Caco-2 (cell line): ENCODE measurements at regions of chr16 and their contacts with region 1.

Region 1: DNA sequence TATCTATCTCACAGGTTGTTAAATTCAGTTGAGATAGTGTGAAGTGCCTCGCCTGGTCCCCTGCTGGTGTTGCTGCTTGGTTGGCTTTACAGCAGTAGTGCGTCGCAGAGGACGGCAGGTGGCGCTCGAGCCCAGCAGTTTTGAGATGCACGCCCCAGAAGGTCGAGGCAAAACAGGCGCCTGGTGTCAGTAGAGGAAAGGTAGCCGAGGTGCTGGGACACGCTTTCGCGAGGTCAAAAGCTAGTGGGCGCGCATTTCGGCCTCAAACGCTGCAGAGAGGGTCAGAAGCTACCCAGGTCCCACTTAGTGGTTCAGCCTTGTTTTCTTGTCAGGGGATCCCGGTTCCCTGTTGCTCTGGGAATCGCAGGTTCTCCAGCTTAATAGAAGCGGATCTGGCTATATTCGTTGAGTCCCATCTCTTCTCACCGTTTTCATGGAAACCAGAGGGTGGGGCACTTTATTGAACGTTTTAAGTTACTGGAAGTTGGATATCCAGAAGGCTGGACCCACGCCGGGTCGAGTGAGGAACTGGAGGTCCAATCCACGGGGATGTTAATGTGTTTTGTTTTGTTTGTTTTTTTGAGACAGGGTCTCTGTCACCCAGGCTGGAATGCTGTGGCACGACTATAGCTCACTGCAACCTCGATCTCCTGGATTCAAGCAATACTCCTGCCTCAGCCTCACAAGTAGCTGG is 10.3 kb upstream of the ZFP90 start:
- DNase-seq: peak; percentile 88 to 94
- H3K4me3 ChIP-seq: peak overlapping the region; percentile 95
- H3K4me3 Mint-ChIP-seq: peak overlapping the region; percentile 83
- H3K27ac Mint-ChIP-seq: peak overlapping the region; percentile 86
- H3K4me1 ChIP-seq: no peaks in the 10 kb centered on the region
- H3K4me1 Mint-ChIP-seq: peaks cover 9% of the 10 kb centered on the region
- H3K27me3 ChIP-seq: no peaks in the 10 kb centered on the region
- H3K27me3 Mint-ChIP-seq: no peaks in the 10 kb centered on the region
- CTCF ChIP-seq: peak; percentile 98

Region 2: DNA sequence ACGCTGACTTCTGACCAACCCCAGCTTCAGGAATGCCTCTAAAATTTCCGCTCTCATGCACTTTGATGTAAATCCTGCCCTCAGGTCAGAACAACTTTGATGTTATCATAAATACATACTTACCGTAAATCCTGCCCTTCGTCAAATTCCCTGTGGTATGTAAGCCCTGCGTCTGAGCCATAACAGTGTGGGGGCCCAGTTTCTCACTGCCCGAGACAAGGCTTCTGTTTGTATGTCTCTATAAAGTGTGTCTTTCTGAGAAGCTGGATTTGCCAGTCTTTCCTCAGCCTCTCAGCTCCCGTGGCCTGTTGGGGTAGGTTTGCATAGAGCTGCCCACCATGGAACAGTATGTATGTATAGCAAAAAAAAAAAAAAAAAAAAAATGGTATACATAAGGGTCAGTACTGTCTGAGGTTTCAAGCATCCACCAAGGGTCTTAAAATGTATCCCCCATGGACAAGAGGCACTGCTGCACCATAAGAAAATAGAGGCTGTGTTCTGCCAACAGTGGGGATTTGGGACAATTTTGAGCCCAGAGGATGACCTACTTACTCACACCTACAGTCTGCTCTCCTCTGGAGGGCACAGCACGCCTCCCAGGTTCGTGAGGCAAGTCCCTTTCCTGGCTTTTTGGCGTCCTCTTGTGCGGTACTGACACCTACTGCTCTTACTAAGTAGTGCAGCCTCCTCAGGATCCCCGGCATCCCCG is 200.5 kb before region 1 on chr16:
- CTCF ChIA-PET with region 1: no interaction called
- POLR2A ChIA-PET with region 1: no interaction called
- intact Hi-C with region 1: no loop called
- DNase-seq: peak; percentile 96
- H3K4me3 ChIP-seq: no peak overlapping the region
- H3K4me3 Mint-ChIP-seq: peak overlapping the region; percentile 65
- H3K27ac Mint-ChIP-seq: peak overlapping the region; percentile 96
- H3K4me1 ChIP-seq: peaks cover 78% of the 10 kb centered on the region
- H3K4me1 Mint-ChIP-seq: peaks cover 49% of the 10 kb centered on the region
- H3K27me3 ChIP-seq: no peaks in the 10 kb centered on the region
- H3K27me3 Mint-ChIP-seq: no peaks in the 10 kb centered on the region
- CTCF ChIP-seq: peak; percentile 96 to 98

Region 3: GRCh38 chr16:68396481-68396880 is 132.4 kb before region 1 on chr16:
- CTCF ChIA-PET with region 1: no interaction called
- POLR2A ChIA-PET with region 1: no interaction called
- intact Hi-C with region 1: no loop called
- DNase-seq: peak in 1 of 2 experiments; percentile 50
- H3K4me3 ChIP-seq: no peak overlapping the region
- H3K4me3 Mint-ChIP-seq: no peak overlapping the region
- H3K27ac Mint-ChIP-seq: no peak overlapping the region
- H3K4me1 ChIP-seq: no peaks in the 10 kb centered on the region
- H3K4me1 Mint-ChIP-seq: no peaks in the 10 kb centered on the region
- H3K27me3 ChIP-seq: no peaks in the 10 kb centered on the region
- H3K27me3 Mint-ChIP-seq: no peaks in the 10 kb centered on the region
- CTCF ChIP-seq: peak; percentile 65 to 69

Region 4: GRCh38 chr16:68590201-68590994 is 61.6 kb after region 1 on chr16:
- CTCF ChIA-PET with region 1: interaction called, 20 read pairs
- POLR2A ChIA-PET with region 1: no interaction called
- intact Hi-C with region 1: loop called (anchors 2 kb)
- DNase-seq: peak; percentile 62 to 74
- H3K4me3 ChIP-seq: no peak overlapping the region
- H3K4me3 Mint-ChIP-seq: peak overlapping the region; percentile 55
- H3K27ac Mint-ChIP-seq: no peak overlapping the region
- H3K4me1 ChIP-seq: no peaks in the 10 kb centered on the region
- H3K4me1 Mint-ChIP-seq: no peaks in the 10 kb centered on the region
- H3K27me3 ChIP-seq: no peaks in the 10 kb centered on the region
- H3K27me3 Mint-ChIP-seq: no peaks in the 10 kb centered on the region
- CTCF ChIP-seq: peak; percentile 44 to 57

Region 5: GRCh38 chr16:68696514-68696913 is 167.7 kb after region 1 on chr16:
- CTCF ChIA-PET with region 1: interaction called, 8 read pairs
- POLR2A ChIA-PET with region 1: no interaction called
- intact Hi-C with region 1: loop called (anchors 2 kb)
- DNase-seq: peak in 1 of 2 experiments; percentile 46
- H3K4me3 ChIP-seq: no peak overlapping the region
- H3K4me3 Mint-ChIP-seq: no peak overlapping the region
- H3K27ac Mint-ChIP-seq: no peak overlapping the region
- H3K4me1 ChIP-seq: no peaks in the 10 kb centered on the region
- H3K4me1 Mint-ChIP-seq: no peaks in the 10 kb centered on the region
- H3K27me3 ChIP-seq: no peaks in the 10 kb centered on the region
- H3K27me3 Mint-ChIP-seq: no peaks in the 10 kb centered on the region
- CTCF ChIP-seq: peak in 1 of 2 experiments; percentile 43

Region 6: GRCh38 chr16:68737046-68737729 is 208.4 kb after region 1 on chr16 and contains the start of gene CDH1:
- CTCF ChIA-PET with region 1: interaction called, 14 read pairs
- POLR2A ChIA-PET with region 1: interaction called, 4 read pairs
- intact Hi-C with region 1: no loop called
- DNase-seq: peak; percentile 98 to 99
- H3K4me3 ChIP-seq: peak within 1 kb of the TSS; percentile 99
- H3K4me3 Mint-ChIP-seq: peak within 1 kb of the TSS; percentile 88
- H3K27ac Mint-ChIP-seq: peak within 1 kb of the TSS; percentile 88
- H3K4me1 ChIP-seq: peaks cover 63% of the 10 kb centered on the region
- H3K4me1 Mint-ChIP-seq: peaks cover 44% of the 10 kb centered on the region
- H3K27me3 ChIP-seq: no peaks in the 10 kb centered on the region
- H3K27me3 Mint-ChIP-seq: no peaks in the 10 kb centered on the region
- CTCF ChIP-seq: no peak
- total RNA-seq, gene CDH1: 712 and 783 TPM in 2 replicates

Region 7: DNA sequence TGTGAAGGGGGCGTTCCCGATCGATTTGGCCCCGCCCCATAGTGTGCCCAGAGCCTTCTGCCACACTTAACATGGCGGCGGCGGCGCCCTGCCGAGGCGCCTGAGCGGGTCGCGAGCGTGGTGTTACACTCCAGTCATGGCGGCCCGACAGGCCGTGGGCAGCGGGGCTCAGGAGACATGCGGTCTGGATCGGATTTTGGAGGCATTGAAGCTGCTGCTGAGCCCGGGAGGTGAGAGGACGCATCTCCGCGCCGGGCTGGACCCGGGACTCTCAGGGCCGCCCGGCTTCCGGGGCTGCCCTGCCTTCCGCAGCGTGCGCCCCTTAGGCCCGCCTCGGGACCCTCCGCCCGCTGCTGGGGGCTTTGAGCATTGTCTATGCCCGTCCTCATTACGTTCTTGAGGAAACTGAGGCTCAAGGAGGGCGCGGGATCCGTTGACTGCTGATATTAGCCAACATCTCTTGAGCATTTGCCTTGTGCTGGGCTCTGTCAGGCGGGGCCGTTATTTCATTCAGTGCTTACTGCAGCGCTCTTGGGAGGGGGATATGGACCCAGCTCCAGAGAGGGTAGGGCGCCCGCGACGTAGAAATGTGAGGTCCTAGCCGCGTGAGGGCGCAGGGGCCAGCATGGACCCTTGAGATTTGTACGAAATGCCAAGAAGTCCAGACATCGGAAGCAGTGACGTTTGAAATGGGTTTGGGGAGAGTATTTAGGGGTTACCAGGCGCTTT is 314.8 kb after region 1 on chr16 and contains the start of gene TANGO6:
- CTCF ChIA-PET with region 1: interaction called, 12 read pairs
- POLR2A ChIA-PET with region 1: no interaction called
- intact Hi-C with region 1: loop called (anchors 2 kb)
- DNase-seq: peak; percentile 88 to 91
- H3K4me3 ChIP-seq: peak within 1 kb of the TSS; percentile 91
- H3K4me3 Mint-ChIP-seq: peak within 1 kb of the TSS; percentile 70
- H3K27ac Mint-ChIP-seq: peak within 1 kb of the TSS; percentile 74
- H3K4me1 ChIP-seq: peaks cover 4% of the 10 kb centered on the region; the same call in 1 of the 2 replicates
- H3K4me1 Mint-ChIP-seq: peaks cover 6% of the 10 kb centered on the region
- H3K27me3 ChIP-seq: no peaks in the 10 kb centered on the region
- H3K27me3 Mint-ChIP-seq: no peaks in the 10 kb centered on the region
- CTCF ChIP-seq: peak; percentile 65 to 78
- total RNA-seq, gene TANGO6: 17.0 and 18.2 TPM in 2 replicates

Region 8: GRCh38 chr16:69123910-69124309 is 595.1 kb after region 1 on chr16:
- CTCF ChIA-PET with region 1: no interaction called
- POLR2A ChIA-PET with region 1: no interaction called
- intact Hi-C with region 1: loop called (anchors 2 kb)
- DNase-seq: peak; percentile 69 to 79
- H3K4me3 ChIP-seq: no peak overlapping the region
- H3K4me3 Mint-ChIP-seq: no peak overlapping the region
- H3K27ac Mint-ChIP-seq: no peak overlapping the region
- H3K4me1 ChIP-seq: no peaks in the 10 kb centered on the region
- H3K4me1 Mint-ChIP-seq: no peaks in the 10 kb centered on the region
- H3K27me3 ChIP-seq: no peaks in the 10 kb centered on the region
- H3K27me3 Mint-ChIP-seq: no peaks in the 10 kb centered on the region
- CTCF ChIP-seq: peak; percentile 67 to 83